ENCODE measurements at regions of chrX and their contacts with region 1.

Region 1: DNA sequence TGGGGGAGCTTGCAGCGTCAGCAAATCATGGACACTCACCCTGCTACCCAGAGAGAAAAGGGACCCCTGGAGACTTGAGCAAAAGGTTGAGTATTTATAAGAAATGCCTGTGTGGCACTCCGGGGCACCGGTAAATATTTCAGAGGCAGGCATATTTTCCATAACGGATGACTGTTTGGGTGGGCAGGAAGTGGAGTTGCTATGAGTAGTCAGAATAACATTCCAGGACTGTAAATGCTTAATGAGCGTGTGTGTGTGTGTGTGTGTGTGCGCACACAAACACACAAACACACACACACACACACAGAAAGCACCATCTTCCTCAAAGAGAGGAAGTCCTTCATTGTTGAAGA is 74.6 kb downstream of the MXRA5 start:
- DNase-seq: peak; percentile 74
- H3K4me3 ChIP-seq: peak overlapping the region in 2 of 3 experiments; percentile 3 to 35
- H3K27ac ChIP-seq: peak overlapping the region; percentile 73
- H3K4me1 ChIP-seq: peaks cover 20% of the 10 kb centered on the region
- H3K27me3 ChIP-seq: no peaks in the 10 kb centered on the region
- CTCF ChIP-seq: no peak
- POLR2A ChIP-seq: no peak

Region 2: GRCh38 chrX:3191201-3191600 is 80.6 kb before region 1 on chrX:
- CTCF ChIA-PET with region 1: no interaction called
- POLR2A ChIA-PET with region 1: no interaction called
- dilution Hi-C with region 1: no loop called
- intact Hi-C with region 1: loop called (anchors 10 kb)
- DNase-seq: no peak
- H3K4me3 ChIP-seq: no peak overlapping the region
- H3K27ac ChIP-seq: no peak overlapping the region
- H3K4me1 ChIP-seq: no peaks in the 10 kb centered on the region
- H3K27me3 ChIP-seq: no peaks in the 10 kb centered on the region
- CTCF ChIP-seq: no peak
- POLR2A ChIP-seq: no peak